ENCODE measurements at regions of chr11 and their contacts with region 1.

Region 1: DNA sequence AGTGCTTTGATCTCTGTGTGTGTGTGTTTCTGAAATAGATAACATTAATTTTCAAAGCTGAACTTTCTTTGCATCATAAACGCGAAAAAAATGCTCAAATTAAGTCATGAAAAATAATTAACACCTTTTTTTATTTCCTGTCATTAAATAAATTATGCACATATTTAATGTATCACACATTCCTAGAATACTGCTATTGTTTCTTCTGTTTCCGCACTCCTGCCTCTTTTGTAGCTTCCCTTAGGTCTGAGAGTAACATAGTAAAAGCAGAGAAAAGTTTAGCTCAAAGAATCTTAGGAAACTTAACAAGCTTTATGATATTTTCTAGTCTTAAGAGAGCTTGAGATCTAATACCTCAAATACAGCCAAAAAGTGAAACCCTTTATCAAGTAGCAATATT is 504.2 kb downstream of the JRKL start:
- DNase-seq: no peak
- CTCF ChIP-seq: no peak

Region 2: GRCh38 chr11:96905143-96905542 is 11.2 kb after region 1 on chr11:
- CTCF ChIA-PET with region 1: interaction called, 10 read pairs
- POLR2A ChIA-PET with region 1: no interaction called
- DNase-seq: no peak
- CTCF ChIP-seq: no peak

Region 3: DNA sequence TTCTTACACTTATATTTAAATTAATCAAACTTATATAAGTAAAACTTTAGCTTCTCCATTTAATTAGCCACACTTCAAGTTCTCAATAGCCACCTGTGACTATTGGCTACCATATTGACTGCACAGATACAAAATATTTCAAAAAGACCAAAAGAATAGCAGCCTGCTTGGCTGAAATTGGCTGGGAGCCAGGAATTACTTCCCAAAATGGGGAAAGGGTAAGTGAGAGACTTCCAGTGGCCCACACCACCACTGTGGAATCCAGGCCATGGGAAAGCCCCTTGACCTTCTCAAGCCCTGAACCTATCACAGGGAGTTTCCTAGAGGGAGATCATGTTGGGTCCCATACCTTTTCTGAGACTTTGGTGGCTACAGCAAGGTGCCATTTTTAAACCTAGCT is 165.5 kb after region 1 on chr11:
- CTCF ChIA-PET with region 1: no interaction called
- POLR2A ChIA-PET with region 1: no interaction called
- DNase-seq: no peak
- CTCF ChIP-seq: no peak

Measured in GM10248 (cell line).